ENCODE measurements at regions of chr10 and their contacts with region 1.

Region 1: GRCh38 chr10:84352251-84352842 is 24.0 kb downstream of the CCSER2 start:
- DNase-seq: no peak
- ATAC-seq: peak; percentile 70
- H3K4me3 Mint-ChIP-seq: no peak overlapping the region
- H3K27ac Mint-ChIP-seq: no peak overlapping the region
- H3K4me1 Mint-ChIP-seq: peaks cover 9% of the 10 kb centered on the region
- H3K27me3 Mint-ChIP-seq: no peaks in the 10 kb centered on the region
- CTCF ChIP-seq: no peak

Region 2: GRCh38 chr10:83736008-83736407 is 616.3 kb before region 1 on chr10:
- CTCF ChIA-PET with region 1: no interaction called
- POLR2A ChIA-PET with region 1: no interaction called
- intact Hi-C with region 1: no loop called
- DNase-seq: no peak
- ATAC-seq: no peak
- H3K4me3 Mint-ChIP-seq: no peak overlapping the region
- H3K27ac Mint-ChIP-seq: no peak overlapping the region
- H3K4me1 Mint-ChIP-seq: no peaks in the 10 kb centered on the region
- H3K27me3 Mint-ChIP-seq: no peaks in the 10 kb centered on the region
- CTCF ChIP-seq: no peak

Region 3: DNA sequence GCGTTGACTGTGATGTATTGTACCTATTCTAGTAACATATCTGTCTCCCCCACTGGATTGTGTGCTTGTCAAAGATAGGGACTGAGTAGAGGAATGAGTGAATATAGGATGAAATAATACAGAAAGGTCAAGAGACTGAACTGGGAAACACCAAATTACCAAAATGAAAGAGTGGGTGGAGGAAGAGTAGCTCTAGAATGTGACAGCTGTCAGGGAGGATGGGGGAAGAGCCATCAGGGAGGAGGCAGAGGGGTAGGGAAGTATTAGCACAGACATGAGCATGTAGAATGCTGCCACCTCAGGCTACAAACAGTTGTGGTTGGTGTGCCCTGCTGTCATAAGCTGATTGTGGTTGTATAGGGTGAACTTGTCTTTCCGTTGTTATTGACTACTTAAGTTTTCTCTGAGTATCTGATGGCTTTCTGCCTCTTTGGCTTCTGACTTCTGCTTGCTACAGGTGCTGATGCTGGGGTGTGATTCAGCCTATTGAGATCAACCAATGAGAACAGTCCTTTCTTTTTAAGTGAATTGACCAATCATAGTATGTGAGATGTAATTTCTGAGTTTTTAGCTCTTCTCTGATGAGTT is 18.4 kb before region 1 on chr10:
- CTCF ChIA-PET with region 1: interaction called, 13 read pairs
- POLR2A ChIA-PET with region 1: no interaction called
- intact Hi-C with region 1: no loop called
- DNase-seq: no peak
- ATAC-seq: peak; percentile 71
- H3K4me3 Mint-ChIP-seq: no peak overlapping the region
- H3K27ac Mint-ChIP-seq: peak overlapping the region; percentile 32
- H3K4me1 Mint-ChIP-seq: peaks cover 43% of the 10 kb centered on the region
- H3K27me3 Mint-ChIP-seq: no peaks in the 10 kb centered on the region
- CTCF ChIP-seq: no peak

Region 4: GRCh38 chr10:84924131-84924530 is 571.8 kb after region 1 on chr10:
- CTCF ChIA-PET with region 1: no interaction called
- POLR2A ChIA-PET with region 1: no interaction called
- intact Hi-C with region 1: no loop called
- DNase-seq: no peak
- ATAC-seq: no peak
- H3K4me3 Mint-ChIP-seq: no peak overlapping the region
- H3K27ac Mint-ChIP-seq: no peak overlapping the region
- H3K4me1 Mint-ChIP-seq: no peaks in the 10 kb centered on the region
- H3K27me3 Mint-ChIP-seq: no peaks in the 10 kb centered on the region
- CTCF ChIP-seq: no peak

Measured in activated B cell treated with CpG ODN at 0.5 μM for 24 hours (primary cell).